Transverse colon (tissue), 4 donors: ENCODE measurements at regions of chr7 and their contacts with region 1.

Region 1: DNA sequence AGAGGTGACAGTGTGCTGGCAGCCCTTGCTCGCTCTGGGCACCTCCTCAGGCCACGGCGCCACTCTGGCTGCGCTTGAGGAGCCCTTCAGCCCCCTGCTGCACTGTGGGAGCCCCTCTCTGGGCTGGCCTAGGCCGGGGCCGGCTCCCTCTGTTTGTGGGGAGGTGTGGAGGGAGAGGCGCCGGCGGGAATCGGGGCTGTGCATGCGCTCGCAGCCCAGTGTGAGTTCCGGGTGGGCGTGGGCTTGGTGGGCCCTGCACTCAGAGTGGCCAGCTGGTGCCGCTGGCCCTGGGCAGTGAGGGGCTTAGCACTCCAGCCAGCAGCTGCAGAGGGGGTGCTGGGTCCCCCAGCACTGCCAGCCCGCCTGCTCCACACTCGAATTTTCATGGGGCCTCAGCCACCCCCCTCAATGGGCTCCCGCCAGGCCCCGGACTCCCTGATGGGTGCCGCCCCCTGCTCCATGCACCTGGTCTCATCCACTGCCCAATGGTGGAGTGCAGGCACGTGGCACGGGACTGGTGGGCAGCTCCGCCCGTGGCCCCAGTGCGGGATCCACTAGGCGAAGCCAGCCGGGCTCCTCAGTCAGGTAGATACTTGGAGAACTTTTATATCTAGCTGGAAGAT is 96.7 kb upstream of the BET1 start:
- DNase-seq: no peak
- H3K4me3 ChIP-seq: no peak overlapping the region
- H3K27ac ChIP-seq: no peak overlapping the region
- H3K4me1 ChIP-seq: no peaks in the 10 kb centered on the region
- H3K27me3 ChIP-seq: no peaks in the 10 kb centered on the region
- CTCF ChIP-seq: no peak
- EP300 ChIP-seq: no peak
- POLR2A ChIP-seq: no peak

Region 2: GRCh38 chr7:93476491-93477344 is 624.1 kb before region 1 on chr7:
- in situ Hi-C with region 1: no loop called
- intact Hi-C with region 1: loop called (anchors 5 kb)
- DNase-seq: no peak
- H3K4me3 ChIP-seq: no peak overlapping the region
- H3K27ac ChIP-seq: no peak overlapping the region
- H3K4me1 ChIP-seq: no peaks in the 10 kb centered on the region
- H3K27me3 ChIP-seq: no peaks in the 10 kb centered on the region
- CTCF ChIP-seq: no peak
- EP300 ChIP-seq: no peak
- POLR2A ChIP-seq: no peak

Region 3: GRCh38 chr7:94012746-94013145 is 88.1 kb before region 1 on chr7:
- in situ Hi-C with region 1: no loop called
- intact Hi-C with region 1: no loop called
- DNase-seq: no peak
- H3K4me3 ChIP-seq: no peak overlapping the region
- H3K27ac ChIP-seq: no peak overlapping the region
- H3K4me1 ChIP-seq: no peaks in the 10 kb centered on the region
- H3K27me3 ChIP-seq: no peaks in the 10 kb centered on the region
- CTCF ChIP-seq: no peak
- EP300 ChIP-seq: no peak
- POLR2A ChIP-seq: no peak

Region 4: GRCh38 chr7:94183289-94183749 is 82.5 kb after region 1 on chr7:
- in situ Hi-C with region 1: no loop called
- intact Hi-C with region 1: no loop called
- DNase-seq: no peak
- H3K4me3 ChIP-seq: no peak overlapping the region
- H3K27ac ChIP-seq: peak overlapping the region in 2 of 4 donors; percentile 50 to 53
- H3K4me1 ChIP-seq: peaks cover 0 to 4% (median 0%) of the 10 kb centered on the region in 4 donors
- H3K27me3 ChIP-seq: no peaks in the 10 kb centered on the region
- CTCF ChIP-seq: no peak
- EP300 ChIP-seq: no peak
- POLR2A ChIP-seq: no peak